Activated naive CD4-positive, alpha-beta T cell treated with anti-CD3 and anti-CD28 coated beads for 36 hours (primary cell): ENCODE measurements at regions of chr9 and their contacts with region 1.

Region 1: GRCh38 chr9:110183208-110184145 is 24.5 kb downstream of the C9orf152 start:
- DNase-seq: peak; percentile 82
- H3K4me3 Mint-ChIP-seq: no peak overlapping the region
- H3K27ac Mint-ChIP-seq: no peak overlapping the region
- H3K4me1 Mint-ChIP-seq: no peaks in the 10 kb centered on the region
- H3K27me3 Mint-ChIP-seq: no peaks in the 10 kb centered on the region

Region 2: GRCh38 chr9:110217656-110218099 is 34.2 kb after region 1 on chr9:
- CTCF ChIA-PET with region 1: interaction called, 14 read pairs
- intact Hi-C with region 1: loop called (anchors 1 kb)
- DNase-seq: no peak
- H3K4me3 Mint-ChIP-seq: no peak overlapping the region
- H3K27ac Mint-ChIP-seq: no peak overlapping the region
- H3K4me1 Mint-ChIP-seq: no peaks in the 10 kb centered on the region
- H3K27me3 Mint-ChIP-seq: no peaks in the 10 kb centered on the region

Region 3: DNA sequence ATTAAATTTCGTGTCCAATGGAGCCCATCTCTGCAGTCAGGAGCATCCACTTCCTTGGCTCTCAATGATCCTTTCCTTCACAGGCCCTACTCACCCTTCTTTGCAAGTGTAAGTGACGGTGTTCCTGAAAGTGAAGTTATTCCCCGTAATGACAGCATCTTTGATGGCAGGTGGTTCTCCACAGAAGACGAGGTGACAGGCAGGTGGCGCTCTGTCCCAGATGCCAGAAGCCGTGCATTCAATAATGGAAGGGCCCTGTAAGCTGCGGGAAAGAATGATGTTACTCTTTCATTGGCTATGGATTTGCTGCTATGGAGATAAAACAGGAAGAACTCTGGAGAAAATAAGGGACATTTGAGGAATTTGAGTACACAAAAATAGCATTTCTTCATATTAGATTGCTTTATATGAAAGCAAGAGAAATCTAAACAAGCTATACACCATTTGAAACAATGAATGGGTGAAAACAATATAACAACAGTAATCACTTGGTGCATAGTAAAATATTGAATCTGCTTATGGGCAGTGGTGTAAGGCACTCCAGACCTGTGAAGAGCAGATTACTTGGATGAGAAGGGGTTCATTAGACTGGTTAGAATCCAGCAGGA is 244.1 kb after region 1 on chr9:
- CTCF ChIA-PET with region 1: no interaction called
- intact Hi-C with region 1: loop called (anchors 5 kb)
- DNase-seq: peak; percentile 63
- H3K4me3 Mint-ChIP-seq: no peak overlapping the region
- H3K27ac Mint-ChIP-seq: no peak overlapping the region
- H3K4me1 Mint-ChIP-seq: no peaks in the 10 kb centered on the region
- H3K27me3 Mint-ChIP-seq: no peaks in the 10 kb centered on the region